Heart left ventricle (tissue), 16 donors: ENCODE measurements at regions of chr6 and their contacts with region 1.

Region 1: DNA sequence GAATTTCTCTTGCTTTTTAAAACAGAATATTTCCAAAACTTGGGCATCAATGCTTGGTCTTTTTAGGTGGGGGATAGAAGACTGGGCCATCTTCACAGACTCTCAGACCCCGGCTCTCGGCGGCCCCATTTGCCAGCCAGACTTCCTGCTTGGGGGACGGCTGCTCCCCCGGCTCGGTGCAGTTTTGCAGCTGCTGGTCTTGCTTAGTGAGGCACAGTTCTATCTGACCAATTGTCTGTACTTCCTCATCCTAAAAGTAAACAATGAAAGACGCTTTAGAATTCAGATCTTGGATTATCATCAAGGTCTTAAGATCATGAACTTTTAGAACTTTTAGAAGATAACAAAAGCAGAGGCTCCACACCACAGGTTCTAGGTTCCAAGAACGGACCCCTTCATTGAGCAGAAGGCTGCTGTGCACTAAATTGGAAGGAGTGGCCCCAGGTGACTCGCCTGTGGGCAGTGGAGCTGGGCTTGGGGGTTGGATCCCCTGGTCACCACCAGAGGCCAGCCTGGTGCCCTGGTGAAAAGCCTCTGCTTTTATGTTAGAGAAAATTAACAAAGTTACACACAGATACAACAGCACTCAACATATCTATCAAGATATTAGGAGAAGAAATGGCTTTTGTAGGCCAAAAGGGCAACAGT is 26.7 kb downstream of the RNASET2 start:
- DNase-seq: no peak
- ATAC-seq: peak in 1 of 4 donors; percentile 29
- H3K4me3 ChIP-seq: peak overlapping the region in 1 of 12 donors; percentile 3
- H3K27ac ChIP-seq: peak overlapping the region in 8 of 12 donors; percentile 73 to 90 (median 81)
- H3K4me1 ChIP-seq: peaks cover 0 to 28% (median 8%) of the 10 kb centered on the region in 12 donors
- H3K27me3 ChIP-seq: no peaks in the 10 kb centered on the region
- CTCF ChIP-seq: peak in 2 of 12 donors; percentile 12 to 21
- POLR2A ChIP-seq: no peak

Region 2: DNA sequence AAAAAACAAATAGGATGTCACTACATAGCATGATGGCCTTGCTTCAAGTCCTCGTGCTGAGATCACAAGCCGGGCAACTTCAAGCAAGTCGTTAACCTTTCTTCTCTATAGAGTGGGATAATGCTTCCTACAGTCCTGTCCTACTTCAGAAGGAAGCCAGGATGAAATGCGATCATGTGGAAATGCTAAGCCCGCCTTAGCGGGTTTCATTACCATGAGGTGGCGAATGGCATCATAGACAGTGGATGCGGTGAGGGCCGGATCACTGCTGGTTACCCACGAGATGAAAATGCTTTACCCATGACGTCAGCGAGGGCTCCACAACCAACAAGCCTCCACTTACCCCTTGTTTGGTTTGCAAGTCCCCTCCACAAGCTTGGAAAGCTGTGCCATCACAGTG is 968.4 kb before region 1 on chr6:
- intact Hi-C with region 1: no loop called
- DNase-seq: no peak
- ATAC-seq: no peak
- H3K4me3 ChIP-seq: no peak overlapping the region
- H3K27ac ChIP-seq: no peak overlapping the region
- H3K4me1 ChIP-seq: no peaks in the 10 kb centered on the region
- H3K27me3 ChIP-seq: peaks cover 0 to 2% (median 0%) of the 10 kb centered on the region in 9 donors
- CTCF ChIP-seq: no peak
- POLR2A ChIP-seq: no peak

Region 3: DNA sequence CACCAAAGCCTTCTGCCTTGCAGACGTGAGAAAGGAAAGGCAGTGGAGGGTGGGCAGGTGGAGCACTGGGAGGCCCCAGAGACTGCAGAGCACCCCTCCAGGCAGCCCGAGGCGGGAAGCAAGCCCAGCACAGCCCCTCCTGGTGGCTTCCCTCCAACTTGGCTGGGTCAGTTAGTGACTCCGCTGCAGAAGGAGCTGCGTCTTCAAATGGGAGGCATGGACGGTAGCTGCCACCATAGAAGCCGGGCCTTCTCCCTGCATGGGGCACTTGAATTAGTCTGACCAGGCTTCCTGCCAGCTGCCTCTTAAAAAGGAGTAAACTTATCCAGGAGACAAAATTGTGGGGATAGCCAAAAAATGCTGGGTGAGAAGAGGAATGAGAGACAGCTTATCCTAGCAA is 214.6 kb before region 1 on chr6:
- intact Hi-C with region 1: no loop called
- DNase-seq: no peak
- ATAC-seq: no peak
- H3K4me3 ChIP-seq: no peak overlapping the region
- H3K27ac ChIP-seq: no peak overlapping the region
- H3K4me1 ChIP-seq: peaks cover 0 to 13% (median 0%) of the 10 kb centered on the region in 12 donors
- H3K27me3 ChIP-seq: no peaks in the 10 kb centered on the region
- CTCF ChIP-seq: no peak
- POLR2A ChIP-seq: no peak

Region 4: DNA sequence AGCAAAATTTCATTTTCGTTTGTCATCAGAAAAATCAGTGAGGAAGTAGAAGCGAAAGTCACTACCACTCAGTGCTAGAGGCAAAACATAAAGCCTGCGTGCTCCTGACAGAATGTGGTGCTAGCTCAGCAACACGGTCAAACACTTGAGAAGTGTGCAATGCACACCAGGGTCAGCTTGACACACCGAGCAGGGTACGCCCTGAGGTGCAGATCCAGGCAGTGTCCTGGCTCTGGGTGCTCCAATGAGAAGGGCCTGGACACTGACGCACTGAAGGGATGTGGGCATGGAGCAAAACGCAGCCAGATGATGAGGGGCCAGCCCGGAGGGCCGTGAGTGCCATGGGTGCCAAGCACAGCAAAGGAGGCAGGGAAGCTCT is 20.8 kb after region 1 on chr6:
- intact Hi-C with region 1: loop called in 1 of 10 experiments (anchors 2 kb)
- DNase-seq: no peak
- ATAC-seq: peak in 3 of 4 donors; percentile 32 to 53 (median 33)
- H3K4me3 ChIP-seq: peak overlapping the region in 6 of 12 donors; percentile 35 to 54 (median 49)
- H3K27ac ChIP-seq: peak overlapping the region; percentile 59 to 92 (median 80)
- H3K4me1 ChIP-seq: peaks cover 0 to 44% (median 3%) of the 10 kb centered on the region in 12 donors
- H3K27me3 ChIP-seq: no peaks in the 10 kb centered on the region
- CTCF ChIP-seq: no peak
- POLR2A ChIP-seq: no peak

Region 5: DNA sequence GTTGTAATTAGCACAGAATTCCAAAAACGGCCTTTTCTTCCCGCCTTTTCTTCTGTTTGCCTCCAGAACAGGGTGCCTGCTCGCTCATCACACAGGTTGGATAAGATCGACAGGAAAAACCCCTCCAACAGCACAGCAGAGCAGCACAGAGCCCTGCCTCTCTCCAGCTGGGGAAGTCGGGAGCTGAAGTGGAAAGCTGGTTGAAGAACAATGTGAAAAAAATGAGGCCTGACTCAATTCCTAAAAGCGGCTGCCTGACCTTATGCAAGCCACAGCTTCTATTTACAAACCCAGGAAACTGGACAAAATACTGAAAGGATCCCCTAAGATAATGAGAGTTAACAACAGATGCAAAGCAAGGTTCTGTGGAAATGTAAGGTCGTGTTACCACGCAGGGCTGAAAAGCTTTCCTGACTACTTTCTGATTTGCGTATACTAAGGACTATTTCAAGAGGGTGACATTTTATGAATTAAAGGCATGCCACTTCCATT is 512.1 kb after region 1 on chr6:
- intact Hi-C with region 1: no loop called
- DNase-seq: no peak
- ATAC-seq: peak in 2 of 4 donors; percentile 26 to 55
- H3K4me3 ChIP-seq: no peak overlapping the region
- H3K27ac ChIP-seq: peak overlapping the region in 2 of 12 donors; percentile 14 to 40
- H3K4me1 ChIP-seq: peaks cover 0 to 17% (median 0%) of the 10 kb centered on the region in 12 donors
- H3K27me3 ChIP-seq: no peaks in the 10 kb centered on the region
- CTCF ChIP-seq: no peak
- POLR2A ChIP-seq: no peak